Activated naive CD4-positive, alpha-beta T cell treated with anti-CD3 and anti-CD28 coated beads for 36 hours (primary cell): ENCODE measurements at regions of chr1 and their contacts with region 1.

Region 1: GRCh38 chr1:116847688-116848531 is 61.8 kb upstream of the PTGFRN start:
- DNase-seq: peak; percentile 62
- H3K4me3 Mint-ChIP-seq: no peak overlapping the region
- H3K27ac Mint-ChIP-seq: peak overlapping the region; percentile 51
- H3K4me1 Mint-ChIP-seq: peaks cover 37% of the 10 kb centered on the region
- H3K27me3 Mint-ChIP-seq: no peaks in the 10 kb centered on the region

Region 2: GRCh38 chr1:116731439-116731838 is 116.5 kb before region 1 on chr1:
- CTCF ChIA-PET with region 1: no interaction called
- intact Hi-C with region 1: no loop called
- DNase-seq: no peak
- H3K4me3 Mint-ChIP-seq: no peak overlapping the region
- H3K27ac Mint-ChIP-seq: no peak overlapping the region
- H3K4me1 Mint-ChIP-seq: peaks cover 32% of the 10 kb centered on the region
- H3K27me3 Mint-ChIP-seq: no peaks in the 10 kb centered on the region

Region 3: GRCh38 chr1:116806245-116806644 is 41.7 kb before region 1 on chr1:
- CTCF ChIA-PET with region 1: no interaction called
- intact Hi-C with region 1: loop called (anchors 1 kb)
- DNase-seq: peak; percentile 91
- H3K4me3 Mint-ChIP-seq: peak overlapping the region; percentile 86
- H3K27ac Mint-ChIP-seq: peak overlapping the region; percentile 97
- H3K4me1 Mint-ChIP-seq: peaks cover 90% of the 10 kb centered on the region
- H3K27me3 Mint-ChIP-seq: no peaks in the 10 kb centered on the region

Region 4: DNA sequence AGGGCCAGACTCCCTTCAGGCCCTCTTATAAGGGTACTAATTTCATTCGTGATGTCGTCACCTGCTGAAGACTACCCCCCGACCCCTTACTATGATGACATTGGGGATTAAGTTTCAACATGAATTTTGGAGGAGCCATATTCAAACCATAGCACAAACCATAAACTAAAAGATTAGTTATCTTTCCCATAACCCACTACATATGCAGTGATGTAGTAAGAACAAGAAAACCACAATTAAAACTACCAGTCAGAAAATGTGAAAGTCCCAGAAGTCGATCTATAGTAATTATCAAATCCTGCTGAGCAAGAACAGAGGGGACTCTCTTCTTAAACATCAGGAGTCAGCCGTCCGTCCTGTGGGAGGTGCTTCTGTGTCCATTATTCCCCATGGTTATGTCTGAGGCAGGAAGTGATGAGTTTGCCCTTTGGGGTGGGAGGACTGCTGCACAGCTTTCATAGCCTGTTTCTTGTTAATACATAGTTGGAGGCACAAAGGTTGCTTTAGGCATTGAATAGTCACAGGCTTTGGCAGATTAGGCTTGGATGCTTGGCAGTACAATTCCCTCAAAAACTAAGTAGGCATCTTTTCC is 25.9 kb after region 1 on chr1:
- CTCF ChIA-PET with region 1: no interaction called
- intact Hi-C with region 1: loop called (anchors 1 kb)
- DNase-seq: peak; percentile 72
- H3K4me3 Mint-ChIP-seq: no peak overlapping the region
- H3K27ac Mint-ChIP-seq: peak overlapping the region; percentile 48
- H3K4me1 Mint-ChIP-seq: peaks cover 31% of the 10 kb centered on the region
- H3K27me3 Mint-ChIP-seq: no peaks in the 10 kb centered on the region

Region 5: GRCh38 chr1:116934586-116935207 is 86.8 kb after region 1 on chr1:
- CTCF ChIA-PET with region 1: no interaction called
- intact Hi-C with region 1: loop called (anchors 1 kb)
- DNase-seq: no peak
- H3K4me3 Mint-ChIP-seq: no peak overlapping the region
- H3K27ac Mint-ChIP-seq: no peak overlapping the region
- H3K4me1 Mint-ChIP-seq: peaks cover 18% of the 10 kb centered on the region
- H3K27me3 Mint-ChIP-seq: no peaks in the 10 kb centered on the region